ENCODE measurements at regions of chr17 and their contacts with region 1.

Region 1: DNA sequence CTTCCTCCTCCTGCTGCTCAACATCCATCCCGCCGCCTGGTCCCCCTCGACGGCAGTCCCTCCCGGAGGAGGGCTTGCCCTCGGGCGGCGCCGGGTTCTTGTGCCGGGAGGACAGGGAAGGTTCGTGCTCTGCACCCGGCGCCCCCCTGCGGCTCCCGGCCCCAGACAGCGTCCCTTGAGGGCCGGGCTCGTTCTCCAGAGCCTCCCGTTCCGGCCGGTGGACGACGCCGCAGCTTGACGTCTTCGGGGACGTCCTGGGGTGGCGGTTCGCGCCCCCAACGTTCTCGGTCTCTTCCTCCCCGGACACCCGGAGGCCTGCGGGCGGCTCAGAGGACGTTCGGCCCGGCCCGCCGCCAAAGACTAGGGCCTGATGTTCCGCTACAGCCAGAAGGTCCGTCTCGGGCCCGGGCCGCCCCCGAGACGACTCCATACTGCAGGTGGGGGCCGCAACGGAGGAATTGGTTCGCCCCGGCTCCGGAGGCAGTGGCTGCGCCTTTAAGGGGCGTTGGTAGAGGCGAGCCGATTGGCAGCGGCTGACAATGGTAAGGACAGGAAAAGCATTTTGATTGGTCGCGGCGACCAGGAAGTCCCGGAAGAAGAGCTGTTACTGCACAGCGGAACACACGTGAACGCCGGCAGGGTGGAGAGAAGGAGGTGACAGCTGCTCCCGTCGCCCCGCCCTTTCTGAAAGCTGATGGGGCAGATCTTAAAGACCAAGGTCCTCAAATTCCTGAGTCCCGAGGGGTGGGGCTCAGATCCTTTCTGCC is at the start of gene BORCS6:
- DNase-seq: peak; percentile 99
- ATAC-seq: peak; percentile 76
- total RNA-seq, gene BORCS6: 9.2 TPM

Region 2: GRCh38 chr17:8015957-8016631 is 173.8 kb before region 1 on chr17:
- intact Hi-C with region 1: no loop called
- DNase-seq: no peak
- ATAC-seq: peak; percentile 42

Region 3: DNA sequence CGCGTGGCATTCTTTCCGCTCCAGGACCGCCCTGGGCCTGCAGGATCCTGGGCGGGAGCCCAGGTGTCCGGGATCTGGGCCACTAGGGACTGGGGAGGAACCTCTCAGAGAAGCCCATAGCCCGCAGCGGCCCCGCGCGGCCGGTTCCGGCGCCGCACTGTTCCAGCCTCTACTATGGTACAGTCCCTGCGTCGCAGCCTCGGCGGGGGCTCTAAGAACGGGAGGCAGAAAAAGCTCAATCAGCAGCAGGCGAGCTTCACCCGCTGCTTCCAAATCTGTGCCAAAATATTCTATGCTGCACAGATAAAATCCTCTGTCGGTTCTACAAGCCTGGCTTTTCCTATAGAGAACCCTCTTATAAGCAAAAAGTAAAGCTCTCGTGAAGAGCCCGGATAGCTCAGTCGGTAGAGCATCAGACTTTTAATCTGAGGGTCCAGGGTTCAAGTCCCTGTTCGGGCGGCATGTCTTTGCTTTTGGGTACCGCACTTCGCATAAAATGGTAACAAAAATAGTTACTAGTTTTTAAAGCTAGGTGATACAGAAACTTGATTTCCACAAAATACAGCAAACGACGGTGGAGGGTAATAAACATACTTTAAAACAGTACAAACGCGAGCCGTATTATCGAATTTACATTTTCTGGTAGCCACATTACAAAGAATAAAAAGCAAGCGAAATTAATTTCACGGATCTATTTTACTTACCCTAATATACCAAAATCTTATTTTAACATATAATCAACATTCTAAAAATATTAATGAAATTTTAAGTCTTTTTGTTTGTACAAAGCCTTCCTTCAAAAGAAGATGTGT is 70.9 kb before region 1 on chr17:
- intact Hi-C with region 1: loop called (anchors 1 kb)
- DNase-seq: peak; percentile 96
- ATAC-seq: peak; percentile 86

Region 4: DNA sequence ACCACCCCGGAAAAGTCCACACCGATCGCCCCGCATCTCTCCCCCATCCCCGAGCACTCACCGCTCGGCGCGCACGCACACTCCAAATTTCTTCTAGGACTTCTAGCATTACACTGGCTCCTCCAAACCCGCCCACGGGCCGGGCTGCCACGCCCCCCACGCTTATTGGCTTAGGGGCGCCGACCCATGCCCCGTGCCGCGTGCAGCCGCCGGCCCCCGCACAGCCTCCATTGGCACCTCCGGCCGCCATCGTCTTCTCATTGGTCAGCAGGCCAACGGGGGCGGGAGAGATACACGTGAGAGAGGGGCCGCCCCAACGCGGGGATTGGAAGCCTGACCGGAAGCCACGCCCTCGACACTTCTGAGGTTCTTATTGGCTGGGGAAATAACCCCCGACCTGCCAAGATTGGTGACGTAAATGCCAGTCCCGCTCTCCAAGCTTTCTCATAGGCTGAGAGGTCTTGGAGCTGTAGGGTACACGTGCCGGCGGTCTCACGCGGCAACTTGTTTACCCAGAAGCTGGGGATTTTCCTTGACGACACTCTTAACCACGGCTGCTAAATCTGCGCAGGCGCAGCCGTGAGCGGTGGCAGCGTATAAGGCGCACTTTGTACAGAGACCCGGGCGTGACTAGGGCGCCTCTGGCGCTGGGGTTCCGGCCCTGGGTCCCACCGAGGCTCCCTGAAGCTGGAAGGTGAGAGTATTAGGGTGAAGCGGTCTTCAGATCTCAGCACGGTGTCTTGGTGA is 33.5 kb before region 1 on chr17:
- intact Hi-C with region 1: loop called (anchors 2 kb)
- DNase-seq: peak; percentile 100
- ATAC-seq: peak; percentile 66

Region 5: GRCh38 chr17:8163978-8164814 is 25.7 kb before region 1 on chr17:
- intact Hi-C with region 1: loop called (anchors 2 kb)
- DNase-seq: peak; percentile 89
- ATAC-seq: peak; percentile 87

Region 6: DNA sequence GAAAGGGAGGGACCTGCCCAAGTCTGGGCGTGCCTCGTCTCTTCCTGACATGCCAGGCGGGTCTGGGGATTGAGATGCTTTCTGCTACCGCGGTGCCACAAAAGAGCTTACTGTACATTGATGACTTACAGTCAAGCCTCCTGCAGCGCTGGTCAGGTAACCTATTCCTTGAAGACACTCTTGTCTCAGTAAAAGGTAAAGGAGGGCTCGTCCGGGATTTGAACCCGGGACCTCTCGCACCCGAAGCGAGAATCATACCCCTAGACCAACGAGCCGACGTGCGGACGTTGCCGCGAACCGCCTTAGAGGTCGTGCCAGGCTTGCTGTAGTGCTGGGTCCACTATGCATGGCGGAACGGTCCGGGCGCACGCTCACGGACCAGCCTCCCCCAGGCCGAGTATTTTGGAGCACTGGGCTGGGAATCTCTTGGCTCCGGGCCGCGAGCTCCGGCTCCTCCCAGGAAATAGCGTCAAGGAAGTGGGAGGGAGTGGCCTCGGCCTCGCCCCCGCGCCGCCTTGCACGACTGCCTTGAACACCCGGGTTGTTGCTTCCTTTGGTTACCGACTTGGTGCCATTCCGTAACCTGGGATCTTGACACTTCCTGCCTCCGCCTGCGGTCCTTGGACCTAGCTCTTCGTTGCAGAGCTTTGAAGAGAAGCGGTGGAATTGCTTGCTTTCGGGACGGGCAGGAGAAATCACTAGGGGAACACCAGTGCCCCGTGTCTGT is 32.9 kb after region 1 on chr17:
- intact Hi-C with region 1: loop called (anchors 1 kb)
- DNase-seq: peak; percentile 97
- ATAC-seq: peak; percentile 75

Region 7: GRCh38 chr17:8248751-8249607 is 59.1 kb after region 1 on chr17 and contains the start of gene PFAS:
- intact Hi-C with region 1: loop called (anchors 1 kb)
- DNase-seq: peak; percentile 99
- ATAC-seq: peak; percentile 81
- total RNA-seq, gene PFAS: 14.7 TPM

Region 8: GRCh38 chr17:8275421-8276290 is 85.8 kb after region 1 on chr17:
- intact Hi-C with region 1: no loop called
- DNase-seq: no peak
- ATAC-seq: no peak

Region 9: DNA sequence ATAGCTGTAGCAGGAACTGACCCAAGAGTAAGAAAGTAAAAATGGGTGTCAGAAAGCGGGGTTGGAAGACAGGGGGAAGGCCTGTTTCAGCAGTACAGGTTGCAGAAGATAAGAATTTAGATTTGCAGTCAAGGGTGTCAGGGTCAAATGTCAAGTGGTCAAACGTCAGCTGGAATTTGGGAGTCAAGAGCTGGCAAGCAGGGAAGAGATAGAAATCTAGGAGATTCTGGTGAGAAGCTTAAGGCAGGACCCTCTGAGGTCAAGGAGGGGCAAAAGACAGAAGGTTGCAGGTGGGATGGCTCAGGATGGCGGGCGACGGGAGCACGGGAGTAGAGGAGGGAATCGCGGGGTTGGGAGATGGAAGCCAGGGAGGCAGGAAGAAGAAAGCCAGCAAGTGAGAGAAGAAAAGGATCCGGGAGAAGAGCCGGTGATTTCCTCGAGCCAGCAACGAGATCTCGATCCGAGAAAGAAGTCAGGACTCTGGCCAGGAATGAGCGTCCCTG is 105.0 kb after region 1 on chr17:
- intact Hi-C with region 1: loop called (anchors 5 kb)
- DNase-seq: no peak
- ATAC-seq: peak; percentile 13

Measured in Right ventricle myocardium inferior (tissue), 1 donor.